ENCODE measurements at regions of chr2 and their contacts with region 1.

Region 1: DNA sequence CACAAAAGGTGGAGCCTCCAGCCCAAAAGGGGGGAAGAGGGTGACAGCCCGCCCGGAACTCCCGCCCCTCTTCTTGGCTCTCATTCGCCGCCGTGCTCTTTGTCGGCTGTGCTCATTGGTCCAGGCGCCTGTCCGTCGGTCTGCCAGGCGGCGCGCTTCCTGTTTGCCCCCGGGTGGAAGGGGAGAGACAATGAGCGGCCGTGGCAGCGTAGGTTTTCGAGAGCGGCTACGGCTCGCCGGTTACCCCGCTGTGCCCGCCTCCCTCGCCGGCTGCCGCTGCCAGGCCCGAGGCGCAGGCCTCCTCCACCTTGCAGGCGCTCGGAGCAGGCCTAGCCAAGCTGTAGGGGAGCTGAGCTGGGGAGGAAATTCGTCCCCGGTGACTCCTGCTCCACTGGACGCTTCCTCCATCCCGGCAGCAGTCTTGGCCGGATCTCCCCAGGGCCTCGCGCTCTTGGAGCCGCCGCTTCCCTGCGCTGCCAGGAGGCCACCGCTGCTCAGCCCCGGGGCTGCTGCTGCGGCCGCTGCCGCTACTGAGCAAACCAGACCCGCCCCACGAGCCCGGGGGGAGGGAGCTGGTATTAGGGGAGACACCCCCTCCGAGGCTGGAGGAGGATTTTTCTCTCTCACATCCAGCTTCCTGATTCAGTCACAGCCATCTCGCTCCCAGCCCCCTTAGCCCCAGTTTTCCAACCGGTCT is at the start of gene SP3:
- DNase-seq: peak; percentile 99
- H3K4me3 ChIP-seq: peak within 1 kb of the TSS; percentile 81 to 99 (median 97)
- H3K27ac ChIP-seq: peak within 1 kb of the TSS; percentile 99 to 100 (median 100)
- H3K4me1 ChIP-seq: peaks cover 0 to 33% (median 27%) of the 10 kb centered on the region in 4 donors
- H3K27me3 ChIP-seq: no peaks in the 10 kb centered on the region
- CTCF ChIP-seq: peak in 1 of 4 experiments; percentile 8
- EP300 ChIP-seq: peak in 1 of 4 donors; percentile 10
- POLR2A ChIP-seq: peak; percentile 80 to 95
- total RNA-seq, gene SP3: 67.9 to 120 (median 107) TPM

Region 2: DNA sequence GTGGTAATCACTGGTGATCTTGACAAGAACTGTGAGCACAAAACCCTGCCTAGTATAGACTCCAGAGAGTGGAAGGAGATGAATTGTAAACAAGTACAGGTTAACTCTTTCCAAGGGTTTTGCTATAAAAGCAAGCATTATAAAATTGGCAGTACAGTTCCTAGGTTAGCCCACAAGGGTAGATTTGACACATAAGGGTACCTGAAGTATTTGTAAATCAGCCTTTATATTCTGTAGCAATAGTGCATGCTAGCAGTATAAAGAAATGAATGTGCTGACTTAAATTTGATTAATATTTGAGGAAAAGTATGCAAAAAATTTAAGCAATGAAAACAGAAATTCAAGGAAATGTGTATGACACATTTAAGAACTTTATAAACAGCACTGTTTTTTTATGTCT is 42.7 kb before region 1 on chr2:
- intact Hi-C with region 1: loop called (anchors 5 kb)
- DNase-seq: no peak
- H3K4me3 ChIP-seq: no peak overlapping the region
- H3K27ac ChIP-seq: no peak overlapping the region
- H3K4me1 ChIP-seq: peaks cover 0 to 55% (median 24%) of the 10 kb centered on the region in 4 donors
- H3K27me3 ChIP-seq: no peaks in the 10 kb centered on the region
- CTCF ChIP-seq: no peak
- EP300 ChIP-seq: no peak
- POLR2A ChIP-seq: no peak

Region 3: GRCh38 chr2:174012347-174013314 is 47.2 kb after region 1 on chr2:
- intact Hi-C with region 1: loop called (anchors 2 kb)
- DNase-seq: peak; percentile 92
- H3K4me3 ChIP-seq: peak overlapping the region; percentile 37 to 62 (median 59)
- H3K27ac ChIP-seq: peak overlapping the region; percentile 85 to 95 (median 93)
- H3K4me1 ChIP-seq: peaks cover 0 to 26% (median 14%) of the 10 kb centered on the region in 4 donors
- H3K27me3 ChIP-seq: no peaks in the 10 kb centered on the region
- CTCF ChIP-seq: no peak
- EP300 ChIP-seq: no peak
- POLR2A ChIP-seq: peak in 1 of 2 donors; percentile 51

Region 4: GRCh38 chr2:174078275-174078674 is 112.8 kb after region 1 on chr2:
- intact Hi-C with region 1: no loop called
- DNase-seq: no peak
- H3K4me3 ChIP-seq: no peak overlapping the region
- H3K27ac ChIP-seq: no peak overlapping the region
- H3K4me1 ChIP-seq: no peaks in the 10 kb centered on the region
- H3K27me3 ChIP-seq: no peaks in the 10 kb centered on the region
- CTCF ChIP-seq: peak in 2 of 4 experiments; percentile 27 to 40
- EP300 ChIP-seq: no peak
- POLR2A ChIP-seq: no peak

Region 5: GRCh38 chr2:174248187-174248997 is 282.9 kb after region 1 on chr2 and contains the start of gene OLA1:
- intact Hi-C with region 1: loop called (anchors 5 kb)
- DNase-seq: peak; percentile 96
- H3K4me3 ChIP-seq: peak within 1 kb of the TSS; percentile 72 to 84 (median 78)
- H3K27ac ChIP-seq: peak within 1 kb of the TSS; percentile 81 to 88 (median 84)
- H3K4me1 ChIP-seq: peaks cover 0 to 19% (median 9%) of the 10 kb centered on the region in 4 donors
- H3K27me3 ChIP-seq: no peaks in the 10 kb centered on the region
- CTCF ChIP-seq: no peak
- EP300 ChIP-seq: no peak
- POLR2A ChIP-seq: no peak
- total RNA-seq, gene OLA1: 51.5 to 67.6 (median 54.4) TPM

Region 6: GRCh38 chr2:174395284-174395968 is 429.9 kb after region 1 on chr2 and contains the start of gene SCRN3:
- intact Hi-C with region 1: loop called (anchors 10 kb)
- DNase-seq: peak; percentile 84
- H3K4me3 ChIP-seq: peak within 1 kb of the TSS; percentile 74 to 82 (median 76)
- H3K27ac ChIP-seq: peak within 1 kb of the TSS; percentile 81 to 87 (median 82)
- H3K4me1 ChIP-seq: peaks cover 0 to 38% (median 28%) of the 10 kb centered on the region in 4 donors
- H3K27me3 ChIP-seq: no peaks in the 10 kb centered on the region
- CTCF ChIP-seq: no peak
- EP300 ChIP-seq: peak in 1 of 4 donors; percentile 30
- POLR2A ChIP-seq: no peak
- total RNA-seq, gene SCRN3: 13.7 to 25.0 (median 15.4) TPM

Measured in sigmoid colon (tissue), 7 donors.